CD14-positive monocyte (primary cell): ENCODE measurements at regions of chr15 and their contacts with region 1.

Region 1: DNA sequence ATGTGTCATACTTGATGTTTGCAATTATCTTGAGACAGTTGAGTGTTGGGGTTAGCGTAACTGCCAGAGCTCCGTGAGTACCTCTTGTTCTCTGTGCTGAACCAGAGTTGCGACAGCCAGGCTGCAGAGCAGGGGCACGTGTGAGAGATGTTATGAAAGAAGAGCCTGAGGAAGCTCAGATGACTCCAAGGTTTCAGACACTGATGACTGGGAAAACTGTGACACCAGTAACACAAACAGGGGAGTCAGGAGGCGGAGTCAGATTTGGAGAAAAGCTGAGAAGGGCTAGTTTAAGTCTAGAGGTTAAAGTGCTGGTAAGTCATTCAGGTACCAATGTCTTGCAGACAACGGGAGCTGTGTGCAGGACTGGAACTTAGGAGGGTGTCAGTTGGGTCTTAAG is 45.0 kb downstream of the BLM start:
- DNase-seq: peak; percentile 93 to 97 (median 96)
- H3K4me3 ChIP-seq: peak overlapping the region in 2 of 3 experiments; percentile 10 to 23
- H3K4me3 Mint-ChIP-seq: peak overlapping the region; percentile 40 to 74
- H3K27ac ChIP-seq: peak overlapping the region; percentile 34 to 79
- H3K27ac Mint-ChIP-seq: peak overlapping the region; percentile 86 to 96 (median 92)
- H3K4me1 ChIP-seq: peaks cover 16 to 21% of the 10 kb centered on the region in 2 donors
- H3K4me1 Mint-ChIP-seq: peaks cover 28% of the 10 kb centered on the region
- H3K27me3 ChIP-seq: no peaks in the 10 kb centered on the region
- H3K27me3 Mint-ChIP-seq: peaks cover 0 to 1% (median 0%) of the 10 kb centered on the region in 3 donors
- CTCF ChIP-seq: no peak

Region 2: DNA sequence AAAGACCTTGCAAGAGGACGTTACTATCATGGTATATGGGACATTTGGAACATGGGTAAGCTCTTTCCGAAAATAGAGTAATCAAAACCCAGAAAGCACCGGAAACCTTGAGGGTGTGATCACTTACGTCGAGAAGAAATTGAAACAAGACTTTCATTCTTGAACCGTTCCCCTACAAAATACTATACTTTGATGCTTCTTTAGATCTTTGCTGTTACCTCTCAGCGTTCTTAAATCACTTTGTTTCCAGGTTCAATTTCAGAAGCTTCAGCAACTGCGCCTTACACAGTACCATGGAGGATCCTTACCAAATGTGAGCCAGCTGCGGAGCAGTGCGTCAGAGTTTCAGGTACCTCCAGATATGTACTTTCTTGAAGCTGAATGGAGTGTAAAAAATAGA is 222.3 kb before region 1 on chr15:
- intact Hi-C with region 1: no loop called
- DNase-seq: no peak
- H3K4me3 ChIP-seq: no peak overlapping the region
- H3K4me3 Mint-ChIP-seq: no peak overlapping the region
- H3K27ac ChIP-seq: no peak overlapping the region
- H3K27ac Mint-ChIP-seq: peak overlapping the region in 1 of 7 donors; percentile 55
- H3K4me1 ChIP-seq: no peaks in the 10 kb centered on the region
- H3K4me1 Mint-ChIP-seq: peaks cover 14% of the 10 kb centered on the region
- H3K27me3 ChIP-seq: no peaks in the 10 kb centered on the region
- H3K27me3 Mint-ChIP-seq: peaks cover 0 to 2% (median 0%) of the 10 kb centered on the region in 3 donors
- CTCF ChIP-seq: no peak

Region 3: GRCh38 chr15:90592131-90592881 is 169.8 kb before region 1 on chr15:
- intact Hi-C with region 1: no loop called
- DNase-seq: peak in 2 of 3 donors; percentile 50 to 77
- H3K4me3 ChIP-seq: peak overlapping the region in 1 of 3 experiments; percentile 10
- H3K4me3 Mint-ChIP-seq: no peak overlapping the region
- H3K27ac ChIP-seq: peak overlapping the region; percentile 12 to 84
- H3K27ac Mint-ChIP-seq: peak overlapping the region; percentile 76 to 93 (median 87)
- H3K4me1 ChIP-seq: peaks cover 50 to 61% of the 10 kb centered on the region in 2 donors
- H3K4me1 Mint-ChIP-seq: peaks cover 59% of the 10 kb centered on the region
- H3K27me3 ChIP-seq: no peaks in the 10 kb centered on the region
- H3K27me3 Mint-ChIP-seq: peaks cover 0 to 1% (median under 1%) of the 10 kb centered on the region in 3 donors
- CTCF ChIP-seq: no peak

Region 4: DNA sequence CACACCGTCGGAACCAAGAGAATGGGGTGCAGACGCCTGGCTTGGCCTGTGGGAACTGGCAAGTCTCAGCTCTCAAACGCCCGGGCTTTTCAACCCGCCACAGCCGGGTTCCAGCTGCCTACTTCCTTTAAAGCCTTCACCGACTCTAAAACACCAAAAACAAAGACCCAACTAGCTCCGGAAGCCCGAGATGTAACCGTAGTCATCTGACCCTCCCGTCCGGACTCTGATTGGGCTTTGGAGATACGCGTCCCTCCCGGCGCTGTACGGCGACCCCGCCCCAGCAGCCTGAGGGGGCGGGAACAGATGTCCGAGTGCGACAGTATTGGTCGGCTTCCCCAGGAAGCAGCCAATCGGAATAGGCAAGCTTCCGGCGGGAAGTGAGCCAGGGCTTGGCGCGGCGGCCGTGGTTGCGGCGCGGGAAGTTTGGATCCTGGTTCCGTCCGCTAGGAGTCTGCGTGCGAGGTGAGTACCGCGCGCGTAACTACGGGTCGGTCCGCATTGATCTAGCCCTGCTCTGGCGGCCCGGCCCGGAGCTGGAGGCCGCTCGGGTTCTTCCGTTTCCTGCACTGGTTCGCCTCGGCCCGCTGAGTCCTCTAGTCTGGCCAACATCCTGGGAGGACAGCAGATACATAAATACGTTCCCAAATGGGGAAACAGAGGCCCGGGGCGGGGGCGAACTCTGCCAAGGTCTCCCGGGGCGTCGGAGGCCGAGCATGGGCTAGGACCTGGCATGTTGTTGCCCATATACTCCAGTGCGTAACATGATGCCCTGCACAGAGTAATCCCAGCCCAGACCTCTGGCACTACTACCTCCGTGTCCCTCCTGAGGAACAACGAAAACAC is 44.9 kb before region 1 on chr15 and contains the start of gene BLM:
- intact Hi-C with region 1: loop called (anchors 10 kb)
- DNase-seq: peak; percentile 96 to 98 (median 98)
- H3K4me3 ChIP-seq: peak within 1 kb of the TSS; percentile 83 to 98 (median 83)
- H3K4me3 Mint-ChIP-seq: peak within 1 kb of the TSS; percentile 93 to 98
- H3K27ac ChIP-seq: peak within 1 kb of the TSS; percentile 87 to 96
- H3K27ac Mint-ChIP-seq: peak within 1 kb of the TSS; percentile 89 to 99 (median 96)
- H3K4me1 ChIP-seq: peaks cover 12 to 26% of the 10 kb centered on the region in 2 donors
- H3K4me1 Mint-ChIP-seq: peaks cover 26% of the 10 kb centered on the region
- H3K27me3 ChIP-seq: no peaks in the 10 kb centered on the region
- H3K27me3 Mint-ChIP-seq: peaks cover 0 to 2% (median 0%) of the 10 kb centered on the region in 3 donors
- CTCF ChIP-seq: peak; percentile 36
- polyA plus RNA-seq, gene BLM: 0.69 to 2.3 (median 1.2) TPM